ENCODE measurements at regions of chr1 and their contacts with region 1.

Region 1: GRCh38 chr1:169367486-169368405 is at the starts of genes BLZF1 and NME7:
- DNase-seq: peak; percentile 100
- H3K4me3 Mint-ChIP-seq: peak within 1 kb of the TSS; percentile 73
- H3K27ac Mint-ChIP-seq: peak within 1 kb of the TSS; percentile 26
- H3K4me1 Mint-ChIP-seq: peaks cover 35% of the 10 kb centered on the region
- H3K27me3 Mint-ChIP-seq: no peaks in the 10 kb centered on the region
- total RNA-seq, gene BLZF1: 11.2 and 11.3 TPM in 2 replicates
- total RNA-seq, gene NME7: 10.6 and 13.8 TPM in 2 replicates

Region 2: GRCh38 chr1:168178638-168179437 is 1188.9 kb before region 1 on chr1 and contains the start of gene TIPRL:
- intact Hi-C with region 1: loop called (anchors 2 kb)
- DNase-seq: peak; percentile 98
- H3K4me3 Mint-ChIP-seq: no peak within 1 kb of the TSS
- H3K27ac Mint-ChIP-seq: no peak within 1 kb of the TSS
- H3K4me1 Mint-ChIP-seq: peaks cover 8% of the 10 kb centered on the region
- H3K27me3 Mint-ChIP-seq: peaks cover 6% of the 10 kb centered on the region
- total RNA-seq, gene TIPRL: 46.8 and 49.2 TPM in 2 replicates

Region 3: DNA sequence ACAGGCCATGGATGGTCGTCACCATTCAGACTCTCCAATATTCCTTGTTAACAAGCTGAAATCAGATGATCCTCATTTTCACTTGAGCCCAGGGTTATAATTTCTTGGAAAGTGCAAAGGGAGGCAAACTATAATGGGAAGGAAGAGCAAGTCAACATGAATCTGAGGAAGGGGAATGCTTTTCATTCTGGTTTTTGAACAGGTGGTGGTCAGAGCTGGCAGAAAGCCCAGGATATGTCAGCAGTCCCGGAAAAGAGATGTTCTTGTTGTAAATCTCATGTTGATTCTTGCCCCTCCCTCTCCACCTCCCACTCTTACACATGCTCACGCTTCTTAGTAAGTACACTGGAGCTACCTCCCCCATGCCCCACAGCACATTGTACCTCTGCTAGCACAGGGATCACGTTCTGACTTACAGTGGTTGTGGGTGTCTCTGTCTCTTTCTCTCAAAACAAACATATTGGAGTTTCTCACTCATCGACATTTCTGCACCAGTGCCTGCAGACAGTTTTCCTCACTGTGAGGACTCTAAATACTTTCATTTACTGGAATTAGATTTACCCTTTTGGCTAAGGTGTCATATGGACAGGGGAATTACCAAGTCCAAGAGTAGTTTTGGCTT is 901.5 kb before region 1 on chr1:
- intact Hi-C with region 1: loop called (anchors 10 kb)
- DNase-seq: peak; percentile 75
- H3K4me3 Mint-ChIP-seq: peak overlapping the region; percentile 32
- H3K27ac Mint-ChIP-seq: peak overlapping the region; percentile 71
- H3K4me1 Mint-ChIP-seq: peaks cover 58% of the 10 kb centered on the region
- H3K27me3 Mint-ChIP-seq: no peaks in the 10 kb centered on the region

Region 4: DNA sequence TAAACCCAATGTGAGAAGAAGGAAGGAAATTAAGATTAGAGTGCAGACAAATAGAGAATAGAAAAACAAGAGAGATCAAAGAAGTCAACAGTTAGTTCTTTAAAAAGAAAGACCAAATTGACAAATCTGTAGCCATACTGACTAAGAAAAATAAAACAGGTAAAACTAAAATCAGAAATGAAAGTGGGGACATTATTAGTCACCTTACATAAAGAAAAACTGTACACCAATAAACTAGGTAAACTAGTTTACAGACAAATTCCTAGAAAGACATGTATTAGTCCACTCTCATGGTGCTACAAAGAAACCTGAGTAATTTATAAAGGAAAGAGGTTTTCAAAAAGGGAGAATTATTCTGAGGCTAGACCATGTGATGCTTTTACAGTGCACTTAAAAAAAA is 22.6 kb after region 1 on chr1:
- intact Hi-C with region 1: loop called (anchors 1 kb)
- DNase-seq: no peak
- H3K4me3 Mint-ChIP-seq: no peak overlapping the region
- H3K27ac Mint-ChIP-seq: peak overlapping the region; percentile 16
- H3K4me1 Mint-ChIP-seq: peaks cover 10% of the 10 kb centered on the region
- H3K27me3 Mint-ChIP-seq: no peaks in the 10 kb centered on the region

Region 5: GRCh38 chr1:169586395-169587255 is 218.9 kb after region 1 on chr1 and contains the start of gene F5:
- intact Hi-C with region 1: loop called (anchors 2 kb)
- DNase-seq: peak; percentile 92
- H3K4me3 Mint-ChIP-seq: peak within 1 kb of the TSS; percentile 95
- H3K27ac Mint-ChIP-seq: peak within 1 kb of the TSS; percentile 92
- H3K4me1 Mint-ChIP-seq: peaks cover 62% of the 10 kb centered on the region
- H3K27me3 Mint-ChIP-seq: no peaks in the 10 kb centered on the region
- total RNA-seq, gene F5: 46.3 and 51.3 TPM in 2 replicates

Region 6: GRCh38 chr1:169893494-169894362 is 526.0 kb after region 1 on chr1 and contains the start of gene SCYL3:
- intact Hi-C with region 1: loop called (anchors 5 kb)
- DNase-seq: peak; percentile 96
- H3K4me3 Mint-ChIP-seq: peak within 1 kb of the TSS; percentile 84
- H3K27ac Mint-ChIP-seq: peak within 1 kb of the TSS; percentile 99
- H3K4me1 Mint-ChIP-seq: peaks cover 44% of the 10 kb centered on the region
- H3K27me3 Mint-ChIP-seq: peaks cover 14% of the 10 kb centered on the region
- total RNA-seq, gene SCYL3: 10.8 and 11.9 TPM in 2 replicates

Measured in activated CD4-positive, alpha-beta T cell treated with anti-CD3 and anti-CD28 coated beads, Interleukin-2, amount 10 ng/mL, durations not matched to agents 24 days and 14 days (primary cell).